Heart right ventricle (tissue), 16 donors: ENCODE measurements at regions of chrX and their contacts with region 1.

Region 1: DNA sequence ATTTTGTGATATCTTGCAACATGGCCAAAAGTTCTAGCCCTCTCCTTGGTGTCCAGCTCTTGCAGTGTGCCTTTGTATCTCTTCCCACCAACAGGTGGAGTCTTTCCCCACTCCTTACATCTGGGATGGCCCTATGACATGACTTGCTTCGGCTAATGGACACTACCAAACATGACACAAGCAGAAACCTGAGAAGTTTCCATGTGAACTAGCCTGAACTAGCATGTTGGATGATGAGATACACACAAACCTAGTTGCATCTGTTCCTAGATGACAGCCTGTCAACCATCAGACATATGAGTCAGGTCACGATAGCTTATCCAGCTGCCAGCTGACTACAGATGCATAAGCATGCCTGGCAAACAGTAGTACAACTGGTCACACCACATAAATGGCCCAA is 207.5 kb upstream of the FTHL17 start:
- DNase-seq: no peak
- ATAC-seq: peak in 1 of 8 donors; percentile 29
- H3K4me3 ChIP-seq: no peak overlapping the region
- H3K27ac ChIP-seq: no peak overlapping the region
- H3K4me1 ChIP-seq: peaks cover 0 to 2% (median 0%) of the 10 kb centered on the region in 9 donors
- H3K27me3 ChIP-seq: no peaks in the 10 kb centered on the region
- CTCF ChIP-seq: peak in 5 of 9 donors; percentile 18 to 43 (median 24)

Region 2: GRCh38 chrX:31314921-31315320 is 35.6 kb after region 1 on chrX:
- intact Hi-C with region 1: loop called in 1 of 10 experiments (anchors 5 kb)
- DNase-seq: peak in 1 of 2 donors; percentile 32
- ATAC-seq: peak in 7 of 8 donors; percentile 71 to 95 (median 84)
- H3K4me3 ChIP-seq: no peak overlapping the region
- H3K27ac ChIP-seq: peak overlapping the region in 8 of 10 donors; percentile 6 to 75 (median 40)
- H3K4me1 ChIP-seq: peaks cover 0 to 37% (median 0%) of the 10 kb centered on the region in 9 donors
- H3K27me3 ChIP-seq: no peaks in the 10 kb centered on the region
- CTCF ChIP-seq: no peak

Region 3: DNA sequence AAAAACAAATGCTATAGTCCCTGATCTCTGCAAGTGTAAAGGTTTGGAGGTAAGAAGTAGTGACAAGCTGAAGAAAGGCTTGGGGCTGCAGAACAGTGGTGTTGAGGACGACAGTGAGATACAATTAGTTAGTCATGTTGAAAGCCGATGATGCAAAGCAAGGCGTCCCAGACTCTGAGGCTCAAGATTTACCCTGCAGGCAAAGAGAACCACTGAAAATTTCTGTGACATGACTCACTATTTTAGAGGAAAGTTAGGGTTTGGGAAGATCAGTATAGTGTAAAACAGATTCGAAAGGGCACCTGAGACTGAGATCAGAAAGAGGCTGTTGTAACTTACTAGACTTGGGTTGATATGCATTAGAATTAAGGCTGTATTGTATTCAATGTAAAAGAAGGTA is 73.7 kb after region 1 on chrX:
- intact Hi-C with region 1: no loop called
- DNase-seq: no peak
- ATAC-seq: no peak
- H3K4me3 ChIP-seq: no peak overlapping the region
- H3K27ac ChIP-seq: no peak overlapping the region
- H3K4me1 ChIP-seq: peaks cover 0 to 4% (median 0%) of the 10 kb centered on the region in 9 donors
- H3K27me3 ChIP-seq: no peaks in the 10 kb centered on the region
- CTCF ChIP-seq: no peak

Region 4: GRCh38 chrX:31423609-31424189 is 144.3 kb after region 1 on chrX:
- intact Hi-C with region 1: loop called in 1 of 10 experiments (anchors 10 kb)
- DNase-seq: peak in 1 of 2 donors; percentile 37
- ATAC-seq: peak in 5 of 8 donors; percentile 10 to 71 (median 22)
- H3K4me3 ChIP-seq: peak overlapping the region in 5 of 10 donors; percentile 4 to 31 (median 13)
- H3K27ac ChIP-seq: peak overlapping the region in 4 of 10 donors; percentile 3 to 36 (median 18)
- H3K4me1 ChIP-seq: peaks cover 0 to 5% (median 0%) of the 10 kb centered on the region in 9 donors
- H3K27me3 ChIP-seq: peaks cover 0 to 4% (median 0%) of the 10 kb centered on the region in 7 donors
- CTCF ChIP-seq: peak in 6 of 9 donors; percentile 27 to 53 (median 40)